ENCODE measurements at regions of chr6 and their contacts with region 1.

Region 1: GRCh38 chr6:11496152-11497060 is 41.1 kb upstream of the TMEM170B start:
- DNase-seq: peak; percentile 80
- ATAC-seq: peak; percentile 92
- H3K4me3 Mint-ChIP-seq: no peak overlapping the region
- H3K27ac Mint-ChIP-seq: no peak overlapping the region
- H3K4me1 Mint-ChIP-seq: peaks cover 2% of the 10 kb centered on the region
- H3K27me3 Mint-ChIP-seq: no peaks in the 10 kb centered on the region

Region 2: GRCh38 chr6:11132194-11132888 is 364.1 kb before region 1 on chr6:
- CTCF ChIA-PET with region 1: interaction called, 21 read pairs
- POLR2A ChIA-PET with region 1: no interaction called
- intact Hi-C with region 1: no loop called
- DNase-seq: no peak
- ATAC-seq: no peak
- H3K4me3 Mint-ChIP-seq: no peak overlapping the region
- H3K27ac Mint-ChIP-seq: no peak overlapping the region
- H3K4me1 Mint-ChIP-seq: peaks cover 12% of the 10 kb centered on the region
- H3K27me3 Mint-ChIP-seq: no peaks in the 10 kb centered on the region

Region 3: DNA sequence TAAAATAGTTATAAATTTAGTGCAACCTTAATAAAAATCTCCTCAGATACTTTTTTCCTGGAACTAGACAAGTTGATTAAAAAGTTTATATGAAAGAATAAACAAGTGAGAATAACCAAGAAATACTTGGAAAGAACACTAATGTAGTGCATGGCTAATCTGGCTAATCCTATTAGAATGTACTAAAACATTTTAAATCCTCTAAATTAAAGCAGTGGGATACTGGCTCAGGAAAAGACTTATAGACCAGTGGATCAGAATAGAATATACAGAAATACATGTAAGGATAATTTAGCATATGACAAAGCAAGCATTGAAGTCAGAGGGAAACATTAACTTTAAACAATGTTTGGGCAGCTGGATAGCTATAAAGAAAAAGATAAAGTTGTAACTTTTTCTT is 343.8 kb before region 1 on chr6:
- CTCF ChIA-PET with region 1: interaction called, 14 read pairs
- POLR2A ChIA-PET with region 1: no interaction called
- intact Hi-C with region 1: no loop called
- DNase-seq: no peak
- ATAC-seq: no peak
- H3K4me3 Mint-ChIP-seq: no peak overlapping the region
- H3K27ac Mint-ChIP-seq: no peak overlapping the region
- H3K4me1 Mint-ChIP-seq: peaks cover 8% of the 10 kb centered on the region
- H3K27me3 Mint-ChIP-seq: peaks cover 11% of the 10 kb centered on the region

Region 4: DNA sequence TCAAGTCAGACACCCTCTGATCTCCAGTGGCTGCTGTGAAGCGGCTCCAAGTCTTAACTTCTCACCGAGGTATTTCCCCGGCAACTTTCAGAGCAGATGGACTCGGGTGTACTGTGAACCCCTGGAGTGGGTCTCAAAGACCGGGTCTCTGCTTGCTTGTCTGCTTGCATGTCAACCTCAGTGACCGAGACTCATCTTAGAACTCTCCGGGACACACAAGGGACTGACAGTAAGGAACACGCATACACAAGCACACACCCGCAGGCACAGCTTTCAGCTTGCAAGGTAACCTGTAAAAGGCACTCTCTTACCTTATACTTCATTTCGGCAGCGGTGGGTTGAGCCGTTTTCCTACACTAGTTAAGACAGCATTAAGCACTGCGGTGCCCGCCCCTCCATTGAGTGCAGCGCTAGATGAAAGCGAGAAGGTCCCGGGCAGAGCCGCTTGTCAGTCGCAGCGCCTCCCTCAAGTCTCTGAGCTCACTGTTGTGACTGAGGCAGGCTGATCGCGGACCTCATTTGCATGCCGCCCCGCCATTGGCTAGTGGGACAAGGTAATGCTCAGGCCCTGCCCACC is 264.1 kb before region 1 on chr6 and contains the start of gene NEDD9:
- CTCF ChIA-PET with region 1: interaction called, 5 read pairs
- POLR2A ChIA-PET with region 1: no interaction called
- intact Hi-C with region 1: loop called (anchors 1 to 2 kb)
- DNase-seq: peak; percentile 97
- ATAC-seq: peak; percentile 96
- H3K4me3 Mint-ChIP-seq: peak within 1 kb of the TSS; percentile 81
- H3K27ac Mint-ChIP-seq: peak within 1 kb of the TSS; percentile 95
- H3K4me1 Mint-ChIP-seq: peaks cover 65% of the 10 kb centered on the region
- H3K27me3 Mint-ChIP-seq: no peaks in the 10 kb centered on the region
- total RNA-seq, gene NEDD9: 23.6 to 27.3 TPM

Region 5: DNA sequence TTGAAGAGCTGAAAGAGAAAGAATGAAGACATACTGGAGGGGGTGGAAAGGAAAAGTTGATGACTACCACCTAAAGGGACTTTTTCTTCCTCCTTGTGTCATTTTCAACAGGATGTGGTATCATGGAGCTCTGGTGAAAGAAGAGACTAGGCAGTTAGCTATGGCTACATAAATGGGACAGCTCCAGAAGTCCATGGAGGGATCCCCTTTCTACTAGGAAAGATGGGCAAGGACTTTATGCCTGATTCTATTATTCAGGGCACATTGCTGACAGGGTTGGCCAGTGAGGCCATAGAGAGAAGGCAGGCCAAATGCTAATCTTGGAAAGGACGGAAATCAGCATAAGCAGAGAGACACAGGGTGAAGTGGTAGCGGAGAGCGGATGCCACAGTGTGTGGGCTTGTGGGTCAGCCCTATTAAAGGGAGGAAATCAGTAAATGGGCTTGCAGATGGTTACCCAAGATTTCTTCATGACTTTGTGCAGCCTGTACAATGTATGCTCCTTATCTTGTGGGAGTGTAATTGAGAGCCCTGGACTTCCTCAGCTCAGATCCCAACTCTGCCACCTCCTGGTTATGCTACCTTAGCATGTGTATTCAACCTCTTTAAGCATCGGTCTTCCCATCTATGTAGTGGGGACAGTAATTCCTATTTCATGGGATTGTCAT is 36.3 kb before region 1 on chr6:
- CTCF ChIA-PET with region 1: interaction called, 14 read pairs
- POLR2A ChIA-PET with region 1: no interaction called
- intact Hi-C with region 1: no loop called
- DNase-seq: peak; percentile 19
- ATAC-seq: peak; percentile 70
- H3K4me3 Mint-ChIP-seq: peak overlapping the region; percentile 35
- H3K27ac Mint-ChIP-seq: peak overlapping the region; percentile 93
- H3K4me1 Mint-ChIP-seq: peaks cover 33% of the 10 kb centered on the region
- H3K27me3 Mint-ChIP-seq: peaks cover 4% of the 10 kb centered on the region

Region 6: GRCh38 chr6:11575408-11576033 is 79.1 kb after region 1 on chr6:
- CTCF ChIA-PET with region 1: interaction called, 14 read pairs
- POLR2A ChIA-PET with region 1: no interaction called
- intact Hi-C with region 1: loop called (anchors 1 kb)
- DNase-seq: peak; percentile 67
- ATAC-seq: peak; percentile 98
- H3K4me3 Mint-ChIP-seq: no peak overlapping the region
- H3K27ac Mint-ChIP-seq: no peak overlapping the region
- H3K4me1 Mint-ChIP-seq: no peaks in the 10 kb centered on the region
- H3K27me3 Mint-ChIP-seq: no peaks in the 10 kb centered on the region

Region 7: GRCh38 chr6:12436683-12437082 is 940.3 kb after region 1 on chr6:
- CTCF ChIA-PET with region 1: no interaction called
- POLR2A ChIA-PET with region 1: no interaction called
- intact Hi-C with region 1: no loop called
- DNase-seq: no peak
- ATAC-seq: no peak
- H3K4me3 Mint-ChIP-seq: no peak overlapping the region
- H3K27ac Mint-ChIP-seq: no peak overlapping the region
- H3K4me1 Mint-ChIP-seq: peaks cover 5% of the 10 kb centered on the region
- H3K27me3 Mint-ChIP-seq: peaks cover 15% of the 10 kb centered on the region